Activated CD4-positive, alpha-beta memory T cell treated with anti-CD3 and anti-CD28 coated beads, Interleukin-2, amount 10 ng/mL, durations not matched to agents 7 days and 5 days (primary cell): ENCODE measurements at regions of chr22 and their contacts with region 1.

Region 1: DNA sequence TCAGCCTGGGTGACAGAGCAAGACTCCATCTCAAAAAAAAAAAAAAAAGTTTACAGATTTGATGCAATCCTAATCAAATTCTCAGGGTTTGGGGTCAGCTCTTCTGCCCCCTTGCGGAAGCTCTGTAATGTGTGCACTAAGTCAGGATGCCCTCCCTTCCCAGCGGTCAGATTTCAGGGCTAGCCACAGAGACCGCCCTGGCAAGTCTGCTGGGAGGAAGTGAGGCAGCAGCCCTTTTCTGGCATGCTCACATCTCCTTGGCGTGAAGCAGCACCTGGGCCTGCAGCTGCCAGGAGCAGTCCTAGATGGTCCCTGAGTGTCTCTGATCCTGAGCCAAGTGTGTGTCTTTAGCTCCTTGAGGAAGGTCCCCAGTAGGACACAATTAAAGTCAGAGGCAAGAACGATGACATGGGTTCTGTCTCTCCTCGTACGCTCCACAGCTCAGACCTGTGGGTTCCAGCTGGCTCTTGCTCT is 10.9 kb upstream of the APOBEC3C start:
- DNase-seq: peak; percentile 88
- H3K4me3 Mint-ChIP-seq: no peak overlapping the region
- H3K27ac Mint-ChIP-seq: peak overlapping the region; percentile 4
- H3K4me1 Mint-ChIP-seq: peaks cover 18% of the 10 kb centered on the region
- H3K27me3 Mint-ChIP-seq: peaks cover 6% of the 10 kb centered on the region

Region 2: GRCh38 chr22:38953577-38954413 is 49.4 kb before region 1 on chr22:
- CTCF ChIA-PET with region 1: interaction called, 10 read pairs
- POLR2A ChIA-PET with region 1: no interaction called
- DNase-seq: peak; percentile 86
- H3K4me3 Mint-ChIP-seq: peak overlapping the region; percentile 52
- H3K27ac Mint-ChIP-seq: peak overlapping the region; percentile 82
- H3K4me1 Mint-ChIP-seq: peaks cover 48% of the 10 kb centered on the region
- H3K27me3 Mint-ChIP-seq: peaks cover 2% of the 10 kb centered on the region

Region 3: DNA sequence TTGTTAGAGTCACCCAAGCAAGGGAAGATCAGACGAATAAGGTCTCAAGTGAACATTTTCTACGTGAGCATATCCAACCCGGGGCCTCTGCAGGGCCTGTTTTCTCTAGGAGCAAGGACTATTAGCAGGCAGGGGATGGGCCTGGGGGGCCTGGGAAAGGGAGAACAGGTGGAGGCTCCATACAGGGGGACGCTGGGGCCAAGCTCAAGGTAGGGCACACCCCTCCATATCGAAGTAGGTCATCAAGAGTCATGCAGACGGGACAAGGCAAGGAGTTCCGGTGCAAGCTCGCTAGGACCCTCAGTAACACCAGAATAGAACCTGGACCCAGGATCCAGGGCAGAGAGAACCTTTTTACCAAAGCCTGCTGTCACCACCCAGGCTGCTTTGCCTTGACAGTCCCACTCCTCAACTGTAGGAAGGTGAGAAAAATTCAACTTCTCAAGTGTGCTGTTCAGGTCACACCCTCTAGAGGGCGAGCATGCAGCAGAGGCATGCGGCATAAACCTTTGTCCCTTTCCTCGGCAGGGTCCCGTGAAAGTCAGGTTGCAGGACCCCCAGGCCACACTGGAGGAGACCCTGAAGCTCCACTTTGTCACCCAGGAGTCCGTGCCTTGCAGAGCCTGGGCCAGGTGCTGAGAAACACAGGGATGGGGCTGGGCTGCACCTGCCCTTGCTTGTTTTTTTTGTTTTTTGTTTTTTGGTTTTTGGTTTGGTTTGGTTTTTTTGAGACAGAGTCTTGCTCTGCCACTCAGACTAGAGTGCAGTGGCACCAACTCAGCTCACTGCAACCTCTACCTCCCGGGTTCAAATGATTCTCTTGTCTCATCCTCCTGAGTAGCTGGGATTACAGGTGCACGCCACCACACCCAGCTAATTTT is 29.7 kb before region 1 on chr22:
- CTCF ChIA-PET with region 1: interaction called, 12 read pairs
- POLR2A ChIA-PET with region 1: interaction called, 3 read pairs
- DNase-seq: peak; percentile 63
- H3K4me3 Mint-ChIP-seq: no peak overlapping the region
- H3K27ac Mint-ChIP-seq: no peak overlapping the region
- H3K4me1 Mint-ChIP-seq: peaks cover 14% of the 10 kb centered on the region
- H3K27me3 Mint-ChIP-seq: peaks cover 29% of the 10 kb centered on the region